Naive thymus-derived CD4-positive, alpha-beta T cell (primary cell): ENCODE measurements at regions of chr1 and their contacts with region 1.

Region 1: DNA sequence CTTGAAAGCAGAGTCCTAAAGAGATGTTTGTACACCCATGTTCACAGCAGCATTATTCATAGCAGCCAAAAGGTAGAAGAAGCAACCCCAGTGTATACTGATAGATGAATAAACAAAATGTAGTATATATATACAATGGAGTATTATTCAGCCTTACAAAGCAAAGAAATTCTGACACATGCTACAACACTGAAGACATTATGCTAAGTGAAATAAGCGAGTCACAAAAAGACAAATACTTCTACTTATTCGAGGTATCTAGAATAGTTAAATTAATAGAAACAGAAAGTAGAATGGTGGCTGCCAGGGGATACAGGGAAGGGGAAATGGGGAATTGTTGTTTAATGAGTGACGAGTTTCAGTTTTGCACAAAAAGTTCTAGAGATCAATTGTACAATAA is 23.5 kb downstream of the COP1 start:
- DNase-seq: no peak
- ATAC-seq: no peak
- H3K4me3 ChIP-seq: no peak overlapping the region
- H3K4me3 Mint-ChIP-seq: no peak overlapping the region
- H3K27ac ChIP-seq: no peak overlapping the region
- H3K27ac Mint-ChIP-seq: no peak overlapping the region
- H3K4me1 ChIP-seq: peaks cover 8 to 9% of the 10 kb centered on the region in 2 donors
- H3K4me1 Mint-ChIP-seq: peaks cover 18 to 64% (median 52%) of the 10 kb centered on the region in 7 donors
- H3K27me3 ChIP-seq: no peaks in the 10 kb centered on the region
- H3K27me3 Mint-ChIP-seq: no peaks in the 10 kb centered on the region

Region 2: GRCh38 chr1:176199707-176200106 is 16.1 kb after region 1 on chr1:
- CTCF ChIA-PET with region 1: no interaction called
- POLR2A ChIA-PET with region 1: no interaction called
- intact Hi-C with region 1: loop called in 1 of 2 experiments (anchors 2 kb)
- DNase-seq: no peak
- ATAC-seq: no peak
- H3K4me3 ChIP-seq: no peak overlapping the region
- H3K4me3 Mint-ChIP-seq: peak overlapping the region in 4 of 10 donors; percentile 5 to 56 (median 38)
- H3K27ac ChIP-seq: no peak overlapping the region
- H3K27ac Mint-ChIP-seq: peak overlapping the region in 1 of 9 donors; percentile 9
- H3K4me1 ChIP-seq: peaks cover 5 to 11% of the 10 kb centered on the region in 2 donors
- H3K4me1 Mint-ChIP-seq: peaks cover 40 to 94% (median 87%) of the 10 kb centered on the region in 7 donors
- H3K27me3 ChIP-seq: no peaks in the 10 kb centered on the region
- H3K27me3 Mint-ChIP-seq: no peaks in the 10 kb centered on the region